Posterior vena cava (tissue), 2 donors: ENCODE measurements at regions of chr3 and their contacts with region 1.

Region 1: DNA sequence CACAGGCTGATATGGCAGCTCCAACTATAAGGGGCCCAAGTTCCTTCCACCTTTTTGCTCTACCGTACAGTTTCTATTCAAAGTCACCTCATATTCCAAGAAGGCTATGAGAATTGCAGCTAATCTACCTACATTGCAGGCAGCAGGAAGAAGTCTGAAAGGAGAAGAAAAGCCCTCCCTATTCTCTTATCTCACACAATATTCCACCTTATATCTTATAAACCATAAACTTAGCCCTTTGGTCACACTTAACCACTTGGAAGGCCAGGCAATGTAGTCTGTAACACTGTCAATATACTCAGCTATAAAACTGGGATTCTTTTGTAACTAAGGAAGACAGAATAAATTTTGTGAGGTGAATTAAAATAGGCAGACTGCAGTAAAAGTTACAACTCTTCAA is 54.9 kb downstream of the TBC1D5 start:
- DNase-seq: no peak

Region 2: DNA sequence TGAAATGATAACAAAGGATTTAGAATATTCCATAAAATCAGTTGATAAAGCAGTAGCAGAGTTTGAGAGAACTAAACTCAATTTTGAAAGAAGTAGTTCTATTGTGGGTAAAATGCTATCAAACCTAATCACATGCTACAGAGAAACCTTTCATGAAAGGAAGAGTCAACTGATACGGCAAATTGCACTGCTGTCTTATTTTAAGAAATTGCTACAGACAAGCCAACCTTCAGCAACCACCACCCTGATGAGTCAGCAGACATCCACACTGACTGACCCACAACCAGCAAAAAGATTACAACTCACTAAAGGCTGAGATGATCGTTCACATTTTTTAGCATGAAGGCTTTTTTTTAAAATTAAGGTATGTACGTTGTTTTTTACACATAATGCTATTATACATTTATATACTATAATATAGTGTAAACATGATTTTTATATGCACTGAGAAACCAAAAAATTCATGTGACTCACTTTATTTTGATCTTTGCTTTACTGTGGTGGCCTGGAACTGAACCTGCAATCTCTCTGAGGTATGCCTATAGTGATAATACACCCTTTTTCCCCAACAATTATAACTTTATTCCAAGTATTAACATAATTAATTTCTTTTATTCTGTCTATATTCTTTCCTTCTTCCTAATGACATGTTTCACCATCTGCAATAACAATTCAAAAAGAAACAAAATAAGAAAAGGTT is 55.0 kb before region 1 on chr3:
- intact Hi-C with region 1: loop called in 1 of 2 experiments (anchors 2 kb)
- DNase-seq: no peak

Region 3: DNA sequence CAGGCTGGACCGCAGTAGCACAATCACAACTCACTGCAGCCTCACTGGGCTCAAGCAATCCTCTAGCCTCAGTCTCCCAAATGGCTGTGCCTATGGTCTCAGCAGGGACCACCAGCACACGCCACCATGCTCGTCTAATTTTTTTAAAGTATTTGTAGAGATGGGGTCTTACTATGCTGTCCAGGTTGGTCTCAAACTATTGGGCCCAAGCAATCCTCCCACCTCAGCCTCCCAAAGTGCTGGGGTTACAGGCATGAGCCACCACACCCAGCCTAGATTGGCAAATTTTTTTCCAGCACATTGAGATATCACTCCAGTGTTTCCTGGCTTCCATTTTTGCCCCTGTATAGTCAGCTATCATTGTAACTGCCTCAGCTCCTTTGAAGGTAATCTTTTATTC is 36.6 kb after region 1 on chr3:
- intact Hi-C with region 1: loop called in 1 of 2 experiments (anchors 2 kb)
- DNase-seq: no peak

Region 4: DNA sequence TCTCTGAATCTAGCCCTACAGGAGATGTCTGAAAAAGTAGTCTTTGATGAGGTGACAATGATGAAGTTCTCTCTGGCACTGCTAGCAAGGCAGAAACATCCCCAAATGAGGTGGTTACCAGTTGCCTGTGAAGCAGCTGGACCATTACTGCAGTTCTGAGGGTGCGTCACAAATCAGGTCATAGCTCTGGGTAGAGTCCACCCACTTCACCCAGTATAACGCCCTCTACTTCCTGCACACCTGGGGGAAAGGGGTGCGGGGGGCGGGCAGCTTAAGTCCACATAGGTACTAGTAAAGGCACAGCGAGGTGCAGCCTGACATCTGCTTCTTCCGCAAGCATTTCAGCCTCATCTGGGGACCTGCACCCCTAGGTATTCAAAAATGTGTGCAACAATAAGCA is 751.0 kb after region 1 on chr3:
- intact Hi-C with region 1: no loop called
- DNase-seq: no peak

Region 5: GRCh38 chr3:18559331-18559842 is 871.8 kb after region 1 on chr3:
- intact Hi-C with region 1: no loop called
- DNase-seq: no peak